Common myeloid progenitor, CD34-positive (primary cell): ENCODE measurements at regions of chr2 and their contacts with region 1.

Region 1: GRCh38 chr2:208040199-208041171 is 15.2 kb upstream of the PLEKHM3 start:
- DNase-seq: peak; percentile 66 to 85 (median 82)
- H3K4me3 ChIP-seq: no peak overlapping the region
- H3K27ac ChIP-seq: no peak overlapping the region
- H3K4me1 ChIP-seq: no peaks in the 10 kb centered on the region
- H3K27me3 ChIP-seq: no peaks in the 10 kb centered on the region

Region 2: GRCh38 chr2:208025037-208025813 is 15.3 kb before region 1 on chr2 and contains the start of gene PLEKHM3:
- CTCF ChIA-PET with region 1: interaction called, 22 read pairs
- POLR2A ChIA-PET with region 1: no interaction called
- DNase-seq: peak; percentile 85 to 90 (median 89)
- H3K4me3 ChIP-seq: peak within 1 kb of the TSS; percentile 80 to 98 (median 90)
- H3K27ac ChIP-seq: peak within 1 kb of the TSS; percentile 77 to 81
- H3K4me1 ChIP-seq: peaks cover 0 to 16% (median 5%) of the 10 kb centered on the region in 4 experiments
- H3K27me3 ChIP-seq: no peaks in the 10 kb centered on the region

Region 3: DNA sequence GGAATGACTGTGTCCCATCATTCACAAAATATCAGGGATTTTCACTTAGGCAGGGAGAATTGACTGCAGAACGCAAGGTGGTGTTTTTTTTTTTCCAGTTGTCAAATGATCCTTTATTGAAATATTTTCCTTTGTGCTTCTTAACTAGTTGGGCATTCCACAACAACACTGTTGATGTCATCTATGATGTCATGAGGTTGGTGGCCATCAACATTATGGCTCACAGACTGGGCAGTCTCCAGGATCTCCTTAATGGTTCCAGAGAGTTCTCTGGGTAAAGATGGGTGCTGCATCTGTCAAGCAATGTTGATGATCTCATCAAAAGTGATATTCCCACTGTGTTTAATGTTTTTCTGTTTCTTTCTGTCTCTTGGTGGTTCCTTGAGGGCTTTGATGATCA is 16.6 kb after region 1 on chr2:
- CTCF ChIA-PET with region 1: interaction called, 10 read pairs
- POLR2A ChIA-PET with region 1: no interaction called
- DNase-seq: no peak
- H3K4me3 ChIP-seq: no peak overlapping the region
- H3K27ac ChIP-seq: no peak overlapping the region
- H3K4me1 ChIP-seq: no peaks in the 10 kb centered on the region
- H3K27me3 ChIP-seq: no peaks in the 10 kb centered on the region